Mammary epithelial cell (primary cell): ENCODE measurements at regions of chr20 and their contacts with region 1.

Region 1: GRCh38 chr20:35092524-35093266 is at the start of gene TRPC4AP:
- DNase-seq: peak; percentile 87
- H3K4me3 ChIP-seq: peak within 1 kb of the TSS; percentile 75 to 99 (median 97)
- H3K27ac ChIP-seq: peak within 1 kb of the TSS; percentile 72
- H3K4me1 ChIP-seq: peaks cover 30% of the 10 kb centered on the region
- H3K27me3 ChIP-seq: no peaks in the 10 kb centered on the region
- CTCF ChIP-seq: peak; percentile 81 to 98
- total RNA-seq, gene TRPC4AP: 63.8 to 89.0 TPM

Region 2: GRCh38 chr20:35129647-35130069 is 37.0 kb after region 1 on chr20:
- CTCF ChIA-PET with region 1: no interaction called
- dilution Hi-C with region 1: loop called (anchors 5 kb)
- in situ Hi-C with region 1: no loop called
- intact Hi-C with region 1: no loop called
- DNase-seq: peak; percentile 32
- H3K4me3 ChIP-seq: no peak overlapping the region
- H3K27ac ChIP-seq: no peak overlapping the region
- H3K4me1 ChIP-seq: no peaks in the 10 kb centered on the region
- H3K27me3 ChIP-seq: no peaks in the 10 kb centered on the region
- CTCF ChIP-seq: no peak

Region 3: GRCh38 chr20:35207950-35208611 is 115.4 kb after region 1 on chr20:
- CTCF ChIA-PET with region 1: interaction called, 3 read pairs
- dilution Hi-C with region 1: no loop called
- in situ Hi-C with region 1: no loop called
- intact Hi-C with region 1: loop called (anchors 1 kb)
- DNase-seq: peak; percentile 63
- H3K4me3 ChIP-seq: peak overlapping the region in 1 of 3 experiments; percentile 9
- H3K27ac ChIP-seq: no peak overlapping the region
- H3K4me1 ChIP-seq: peaks cover 6% of the 10 kb centered on the region
- H3K27me3 ChIP-seq: no peaks in the 10 kb centered on the region
- CTCF ChIP-seq: peak; percentile 78 to 86

Region 4: GRCh38 chr20:35607003-35607750 is 514.5 kb after region 1 on chr20:
- CTCF ChIA-PET with region 1: interaction called, 14 read pairs
- dilution Hi-C with region 1: no loop called
- in situ Hi-C with region 1: no loop called
- intact Hi-C with region 1: no loop called
- DNase-seq: peak; percentile 63
- H3K4me3 ChIP-seq: no peak overlapping the region
- H3K27ac ChIP-seq: no peak overlapping the region
- H3K4me1 ChIP-seq: peaks cover 8% of the 10 kb centered on the region
- H3K27me3 ChIP-seq: no peaks in the 10 kb centered on the region
- CTCF ChIP-seq: no peak